ENCODE measurements at regions of chrX and their contacts with region 1.

Region 1: GRCh38 chrX:57821703-57822375 is 88.4 kb downstream of the ZXDA start:
- DNase-seq: peak; percentile 62
- H3K4me3 ChIP-seq: 0 out of 2 replicates have a peak overlapping the region, but pooled peaks have one; percentile 29
- H3K27ac ChIP-seq: no peak overlapping the region
- H3K4me1 ChIP-seq: 0 out of 2 replicates have a peak, but pooled peaks cover 4% of the 10 kb centered on the region
- H3K27me3 ChIP-seq: no peaks in the 10 kb centered on the region

Region 2: DNA sequence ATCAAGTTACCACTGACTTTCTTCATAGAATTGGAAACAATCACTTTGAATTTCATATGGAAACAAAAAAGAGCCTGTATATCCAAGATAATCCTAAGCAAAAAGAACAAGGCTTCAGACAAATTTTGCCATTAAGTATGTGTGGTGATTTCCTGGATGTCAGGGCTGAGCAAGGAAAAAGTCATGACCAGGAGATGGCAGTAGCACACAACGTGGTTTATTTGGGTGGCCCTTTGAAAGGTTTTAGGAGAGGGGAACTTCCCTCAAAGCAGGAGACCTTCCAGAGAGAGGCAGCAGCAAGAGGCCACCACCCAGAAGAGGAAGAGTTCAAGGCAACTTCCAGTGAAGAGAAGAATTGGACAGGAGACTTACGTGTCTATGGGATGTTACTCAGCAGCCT is 248.1 kb before region 1 on chrX:
- in situ Hi-C with region 1: loop called (anchors 25 kb)
- DNase-seq: peak; percentile 23
- H3K4me3 ChIP-seq: no peak overlapping the region
- H3K27ac ChIP-seq: no peak overlapping the region
- H3K4me1 ChIP-seq: no peaks in the 10 kb centered on the region
- H3K27me3 ChIP-seq: no peaks in the 10 kb centered on the region

Region 3: GRCh38 chrX:57929373-57929772 is 107.5 kb after region 1 on chrX:
- in situ Hi-C with region 1: loop called (anchors 10 kb)
- DNase-seq: peak; percentile 45
- H3K4me3 ChIP-seq: no peak overlapping the region
- H3K27ac ChIP-seq: no peak overlapping the region
- H3K4me1 ChIP-seq: no peaks in the 10 kb centered on the region
- H3K27me3 ChIP-seq: no peaks in the 10 kb centered on the region

Region 4: GRCh38 chrX:58025979-58026378 is 204.1 kb after region 1 on chrX:
- in situ Hi-C with region 1: loop called (anchors 25 kb)
- DNase-seq: peak; percentile 47
- H3K4me3 ChIP-seq: no peak overlapping the region
- H3K27ac ChIP-seq: no peak overlapping the region
- H3K4me1 ChIP-seq: no peaks in the 10 kb centered on the region
- H3K27me3 ChIP-seq: no peaks in the 10 kb centered on the region

Measured in GM23248 (cell line).